Activated B cell treated with CpG ODN at 0.5 μM for 24 hours (primary cell): ENCODE measurements at regions of chr12 and their contacts with region 1.

Region 1: DNA sequence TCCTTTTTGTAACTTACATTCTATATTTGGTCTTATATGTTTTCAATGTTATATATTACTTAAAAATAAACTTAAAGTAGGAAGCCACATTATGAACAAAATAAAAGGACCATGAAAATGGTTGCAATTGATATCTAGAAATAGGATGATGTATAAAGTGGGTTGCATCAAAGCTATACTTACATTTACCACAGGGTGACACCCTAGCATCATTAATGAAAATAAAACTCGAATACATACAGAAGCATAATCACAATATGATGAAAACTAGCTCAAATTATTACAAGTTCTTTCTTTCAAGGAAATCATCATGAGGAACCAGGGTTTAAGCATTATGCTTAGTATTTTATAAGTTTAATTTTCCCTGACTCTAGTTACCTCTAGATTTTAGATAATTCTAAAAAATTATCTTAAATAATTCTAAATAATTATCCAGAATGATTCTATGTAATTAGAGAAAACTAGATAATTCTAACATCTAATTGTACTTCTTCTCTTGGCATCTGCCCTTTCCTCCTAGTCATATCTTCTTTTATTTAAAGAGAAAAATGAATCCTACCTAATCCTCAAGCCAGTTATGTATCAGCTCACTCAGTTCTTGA is 31.2 kb downstream of the TAS2R7 start:
- DNase-seq: no peak
- ATAC-seq: peak; percentile 54
- H3K4me3 Mint-ChIP-seq: no peak overlapping the region
- H3K27ac Mint-ChIP-seq: no peak overlapping the region
- H3K4me1 Mint-ChIP-seq: no peaks in the 10 kb centered on the region
- H3K27me3 Mint-ChIP-seq: peaks cover 17% of the 10 kb centered on the region
- CTCF ChIP-seq: no peak

Region 2: GRCh38 chr12:11202811-11203210 is 431.6 kb after region 1 on chr12:
- CTCF ChIA-PET with region 1: interaction called, 47 read pairs
- POLR2A ChIA-PET with region 1: no interaction called
- intact Hi-C with region 1: no loop called
- DNase-seq: no peak
- ATAC-seq: no peak
- H3K4me3 Mint-ChIP-seq: no peak overlapping the region
- H3K27ac Mint-ChIP-seq: no peak overlapping the region
- H3K4me1 Mint-ChIP-seq: no peaks in the 10 kb centered on the region
- H3K27me3 Mint-ChIP-seq: no peaks in the 10 kb centered on the region
- CTCF ChIP-seq: no peak

Region 3: GRCh38 chr12:12334367-12335040 is 1563.3 kb after region 1 on chr12:
- CTCF ChIA-PET with region 1: no interaction called
- POLR2A ChIA-PET with region 1: no interaction called
- intact Hi-C with region 1: loop called (anchors 1 kb)
- DNase-seq: peak; percentile 41
- ATAC-seq: peak; percentile 72
- H3K4me3 Mint-ChIP-seq: no peak overlapping the region
- H3K27ac Mint-ChIP-seq: no peak overlapping the region
- H3K4me1 Mint-ChIP-seq: peaks cover 9% of the 10 kb centered on the region
- H3K27me3 Mint-ChIP-seq: peaks cover 2% of the 10 kb centered on the region
- CTCF ChIP-seq: peak; percentile 58